ENCODE measurements at regions of chr11 and their contacts with region 1.

Region 1: GRCh38 chr11:35980686-35981390 is 37.0 kb downstream of the LDLRAD3 start:
- DNase-seq: no peak
- ATAC-seq: peak; percentile 78
- H3K4me3 ChIP-seq: no peak overlapping the region
- H3K27ac ChIP-seq: no peak overlapping the region
- H3K4me1 ChIP-seq: peaks cover 6% of the 10 kb centered on the region; the same call in 1 of the 2 replicates
- H3K27me3 ChIP-seq: no peaks in the 10 kb centered on the region
- CTCF ChIP-seq: no peak
- EP300 ChIP-seq: peak in 1 of 2 experiments; percentile 25; a peak in 1 of 4 replicates
- POLR2A ChIP-seq: no peak
- RAD21 ChIP-seq: no peak

Region 2: DNA sequence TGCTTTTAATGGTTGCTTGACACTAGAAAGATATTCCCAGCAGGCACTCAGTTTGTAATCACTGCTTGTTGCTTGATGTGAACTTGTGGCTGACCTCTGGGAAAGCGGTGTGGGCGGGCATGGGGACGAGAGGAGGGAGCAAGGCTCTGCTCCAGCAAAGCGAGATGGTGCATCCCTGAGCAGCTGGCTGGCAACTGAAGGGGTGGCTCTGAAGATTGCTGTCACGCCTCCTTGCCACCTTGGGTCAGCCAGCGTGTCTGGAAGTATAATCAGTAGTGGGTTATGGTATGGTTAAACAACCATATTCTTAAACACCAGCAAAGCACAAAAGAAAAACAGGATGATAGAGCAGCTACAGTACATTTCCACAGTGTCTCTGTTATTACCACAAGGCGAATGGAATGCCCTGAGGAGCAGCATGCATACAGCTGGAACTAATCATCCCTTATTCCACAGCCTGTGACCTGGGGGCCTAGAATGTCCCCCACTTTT is 193.8 kb before region 1 on chr11:
- CTCF ChIA-PET with region 1: no interaction called
- POLR2A ChIA-PET with region 1: no interaction called
- RAD21 ChIA-PET with region 1: no interaction called
- SMC1A ChIA-PET with region 1: no interaction called
- in situ Hi-C with region 1: no loop called
- intact Hi-C with region 1: no loop called
- DNase-seq: no peak
- ATAC-seq: no peak
- H3K4me3 ChIP-seq: no peak overlapping the region
- H3K27ac ChIP-seq: no peak overlapping the region
- H3K4me1 ChIP-seq: peaks cover 17% of the 10 kb centered on the region
- H3K27me3 ChIP-seq: no peaks in the 10 kb centered on the region
- CTCF ChIP-seq: no peak
- EP300 ChIP-seq: no peak
- POLR2A ChIP-seq: no peak
- RAD21 ChIP-seq: no peak

Region 3: DNA sequence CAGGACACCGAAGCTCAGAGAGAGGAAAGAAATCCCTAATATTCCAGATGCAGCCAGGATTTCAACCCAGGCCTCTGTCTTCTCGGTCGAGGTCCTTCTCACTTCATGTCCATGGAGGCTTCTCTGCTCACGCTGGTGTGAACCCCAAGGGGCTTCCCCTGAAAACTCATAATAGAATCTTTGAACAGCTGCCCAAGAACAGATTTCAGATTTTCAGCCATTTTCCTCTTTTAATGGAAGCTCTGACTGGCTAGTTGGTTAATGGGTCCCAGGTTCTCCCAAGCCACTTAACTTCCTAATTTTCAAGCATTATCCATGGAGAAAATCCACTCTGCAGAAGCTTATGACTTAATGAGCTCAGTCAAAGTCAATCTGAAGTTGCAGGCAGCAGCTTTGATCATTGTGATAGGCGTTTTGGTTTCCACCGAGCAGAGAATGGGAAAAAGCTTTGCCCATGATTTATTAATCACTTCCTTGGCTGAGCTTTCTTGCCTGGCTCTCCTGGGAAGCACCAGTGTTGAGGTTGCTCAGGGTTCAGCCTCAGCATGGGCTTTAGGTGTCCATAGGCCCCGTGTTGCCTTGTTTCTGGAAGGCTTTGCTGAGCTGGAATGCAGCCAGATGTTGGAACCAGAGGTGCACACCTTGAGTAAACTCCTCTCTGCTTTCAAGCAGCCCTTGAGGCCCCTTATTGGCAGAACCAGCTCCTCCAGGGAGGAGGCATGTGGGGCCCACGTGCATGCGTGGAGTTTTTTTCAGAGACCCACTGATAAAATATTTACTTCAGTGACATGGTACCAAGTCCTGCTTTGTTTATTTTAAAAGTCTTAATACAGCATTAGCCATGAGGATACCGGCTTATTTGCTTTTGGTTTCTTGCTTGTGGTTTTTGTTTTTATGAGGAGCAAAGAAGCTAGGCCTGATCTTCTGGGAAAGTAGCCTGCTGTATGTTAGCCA is 11.5 kb before region 1 on chr11:
- CTCF ChIA-PET with region 1: interaction called, 5 read pairs
- POLR2A ChIA-PET with region 1: interaction called, 3 read pairs
- RAD21 ChIA-PET with region 1: interaction called, 11 read pairs
- SMC1A ChIA-PET with region 1: interaction called, 16 read pairs
- in situ Hi-C with region 1: no loop called
- intact Hi-C with region 1: no loop called
- DNase-seq: no peak
- ATAC-seq: peak; percentile 67
- H3K4me3 ChIP-seq: no peak overlapping the region
- H3K27ac ChIP-seq: no peak overlapping the region
- H3K4me1 ChIP-seq: peaks cover 7% of the 10 kb centered on the region
- H3K27me3 ChIP-seq: no peaks in the 10 kb centered on the region
- CTCF ChIP-seq: no peak
- EP300 ChIP-seq: no peak
- POLR2A ChIP-seq: no peak
- RAD21 ChIP-seq: no peak

Region 4: GRCh38 chr11:35997902-35998525 is 17.2 kb after region 1 on chr11:
- CTCF ChIA-PET with region 1: interaction called, 5 read pairs
- POLR2A ChIA-PET with region 1: interaction called, 3 read pairs
- RAD21 ChIA-PET with region 1: interaction called, 6 read pairs
- SMC1A ChIA-PET with region 1: interaction called, 32 read pairs
- in situ Hi-C with region 1: no loop called
- intact Hi-C with region 1: no loop called
- DNase-seq: peak; percentile 24
- ATAC-seq: peak; percentile 88
- H3K4me3 ChIP-seq: no peak overlapping the region
- H3K27ac ChIP-seq: no peak overlapping the region; the same call in 1 of the 2 replicates
- H3K4me1 ChIP-seq: peaks cover 11% of the 10 kb centered on the region
- H3K27me3 ChIP-seq: no peaks in the 10 kb centered on the region
- CTCF ChIP-seq: no peak
- EP300 ChIP-seq: peak; percentile 38 to 43; a peak in 1 of 4 replicates
- POLR2A ChIP-seq: no peak
- RAD21 ChIP-seq: 0 out of 2 replicates have a peak, but pooled peaks have one; percentile 1